Common myeloid progenitor, CD34-positive (primary cell): ENCODE measurements at regions of chr19 and their contacts with region 1.

Region 1: GRCh38 chr19:35931161-35931873 is 4.9 kb upstream of the LRFN3 start:
- DNase-seq: peak; percentile 99 to 100 (median 99)
- H3K4me3 ChIP-seq: peak overlapping the region in 6 of 7 experiments; percentile 32 to 74 (median 57)
- H3K27ac ChIP-seq: no peak overlapping the region
- H3K4me1 ChIP-seq: peaks cover 16 to 31% (median 27%) of the 10 kb centered on the region in 4 experiments
- H3K27me3 ChIP-seq: peaks cover 0 to 2% (median 0%) of the 10 kb centered on the region in 5 experiments

Region 2: GRCh38 chr19:35882114-35882832 is 49.0 kb before region 1 on chr19:
- CTCF ChIA-PET with region 1: interaction called, 106 read pairs
- POLR2A ChIA-PET with region 1: interaction called, 8 read pairs
- DNase-seq: peak; percentile 77 to 92 (median 88)
- H3K4me3 ChIP-seq: no peak overlapping the region
- H3K27ac ChIP-seq: no peak overlapping the region
- H3K4me1 ChIP-seq: peaks cover 0 to 3% (median 1%) of the 10 kb centered on the region in 4 experiments
- H3K27me3 ChIP-seq: peaks cover 0 to 22% (median 8%) of the 10 kb centered on the region in 5 experiments

Region 3: DNA sequence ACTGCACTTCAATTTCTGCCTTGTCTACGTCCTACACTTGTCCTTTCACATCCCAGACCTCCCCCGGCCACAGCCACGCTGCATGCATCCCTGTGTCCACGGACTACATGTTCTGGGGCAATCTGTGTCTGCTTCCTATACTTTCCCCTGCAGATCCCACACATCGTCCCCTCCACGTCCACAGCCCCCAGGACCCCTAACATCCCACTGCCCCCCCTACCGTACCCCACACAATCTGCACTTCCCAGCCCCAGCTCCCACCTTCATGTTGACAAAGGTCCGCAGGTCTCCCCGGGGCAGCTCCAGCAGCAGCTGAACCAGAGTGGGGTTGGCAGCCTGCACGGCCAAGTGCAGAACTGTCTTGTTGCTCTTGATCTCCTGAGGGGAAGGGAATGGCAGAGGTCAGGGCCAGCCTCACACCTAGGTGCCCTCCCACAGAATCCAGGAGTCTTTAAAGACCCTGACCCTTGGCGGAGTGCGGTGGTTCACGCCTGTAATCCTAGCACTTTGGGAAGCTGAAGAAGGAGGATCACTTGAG is 41.1 kb before region 1 on chr19:
- CTCF ChIA-PET with region 1: interaction called, 21 read pairs
- POLR2A ChIA-PET with region 1: interaction called, 8 read pairs
- DNase-seq: no peak
- H3K4me3 ChIP-seq: no peak overlapping the region
- H3K27ac ChIP-seq: no peak overlapping the region
- H3K4me1 ChIP-seq: no peaks in the 10 kb centered on the region
- H3K27me3 ChIP-seq: no peaks in the 10 kb centered on the region

Region 4: GRCh38 chr19:35908973-35909683 is 22.2 kb before region 1 on chr19:
- CTCF ChIA-PET with region 1: interaction called, 11 read pairs
- POLR2A ChIA-PET with region 1: interaction called, 7 read pairs
- DNase-seq: peak; percentile 97 to 99 (median 99)
- H3K4me3 ChIP-seq: peak overlapping the region in 5 of 7 experiments; percentile 22 to 68 (median 44)
- H3K27ac ChIP-seq: peak overlapping the region; percentile 85 to 90
- H3K4me1 ChIP-seq: peaks cover 11 to 80% (median 55%) of the 10 kb centered on the region in 4 experiments
- H3K27me3 ChIP-seq: no peaks in the 10 kb centered on the region

Region 5: GRCh38 chr19:35949131-35949530 is 17.8 kb after region 1 on chr19:
- CTCF ChIA-PET with region 1: no interaction called
- POLR2A ChIA-PET with region 1: no interaction called
- DNase-seq: no peak
- H3K4me3 ChIP-seq: no peak overlapping the region
- H3K27ac ChIP-seq: no peak overlapping the region
- H3K4me1 ChIP-seq: peaks cover 10 to 21% (median 16%) of the 10 kb centered on the region in 4 experiments
- H3K27me3 ChIP-seq: no peaks in the 10 kb centered on the region